PC-3 (cell line): ENCODE measurements at regions of chr21 and their contacts with region 1.

Region 1: DNA sequence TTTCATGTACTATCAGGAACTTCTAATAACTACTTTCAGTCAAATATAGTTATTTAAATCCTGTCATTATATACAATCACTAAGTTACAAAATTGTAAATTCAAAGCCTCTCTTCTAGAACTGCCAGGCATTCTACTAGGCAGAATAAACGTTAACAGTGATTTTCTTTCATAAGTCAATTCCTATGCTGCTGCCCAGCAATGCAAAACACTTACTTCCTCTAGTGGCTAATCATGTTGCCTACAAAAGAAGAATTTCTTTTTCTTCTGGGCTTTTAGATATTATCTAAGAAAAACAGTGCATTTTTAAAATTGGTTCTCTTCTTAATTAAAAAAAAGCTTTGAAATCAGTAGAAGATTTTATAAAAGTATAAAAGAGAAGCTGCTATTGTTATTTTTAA is 509.8 kb upstream of the ADAMTS5 start:
- DNase-seq: no peak
- ATAC-seq: no peak
- H3K4me3 ChIP-seq: no peak overlapping the region
- H3K27ac ChIP-seq: no peak overlapping the region
- H3K4me1 ChIP-seq: no peaks in the 10 kb centered on the region
- H3K27me3 ChIP-seq: no peaks in the 10 kb centered on the region
- CTCF ChIP-seq: peak; percentile 34; the same call in 1 of the 2 replicates

Region 2: DNA sequence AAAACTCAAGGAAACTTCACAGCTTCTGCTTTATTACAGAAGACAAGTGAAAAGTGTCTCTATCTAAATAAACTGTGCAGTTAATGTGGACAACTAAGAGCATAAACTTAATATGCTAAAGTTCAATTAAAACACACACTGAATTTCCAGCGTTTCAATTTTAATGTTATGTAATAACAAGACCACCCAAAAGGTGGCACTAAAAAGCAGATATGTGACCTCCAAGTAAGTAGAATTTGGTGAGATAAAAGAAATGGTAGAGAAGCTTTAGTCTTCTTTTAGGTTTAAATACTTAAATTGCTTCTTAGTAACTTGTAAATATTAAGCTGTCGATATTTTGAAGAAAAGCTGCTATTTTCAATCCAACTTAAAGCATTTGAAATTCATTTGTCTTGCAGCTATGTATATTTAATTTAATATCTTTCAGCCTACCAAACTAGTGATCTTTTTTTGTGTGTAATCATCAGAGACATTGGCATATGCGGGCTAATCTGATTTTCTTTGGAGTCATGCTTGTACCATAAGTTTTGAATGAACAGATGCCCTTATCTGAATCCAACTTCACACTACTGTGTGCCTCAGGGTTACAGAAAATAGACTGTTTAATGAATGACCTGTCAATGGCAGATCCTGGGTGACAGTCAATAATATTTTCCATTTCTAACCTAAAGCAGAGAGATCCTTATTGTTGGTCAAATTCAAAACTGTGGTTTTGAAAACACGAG is 595.0 kb before region 1 on chr21:
- CTCF ChIA-PET with region 1: no interaction called
- POLR2A ChIA-PET with region 1: no interaction called
- intact Hi-C with region 1: loop called (anchors 10 kb)
- DNase-seq: peak; percentile 39
- ATAC-seq: no peak; the same call in 1 of the 2 replicates
- H3K4me3 ChIP-seq: no peak overlapping the region
- H3K27ac ChIP-seq: no peak overlapping the region
- H3K4me1 ChIP-seq: no peaks in the 10 kb centered on the region
- H3K27me3 ChIP-seq: no peaks in the 10 kb centered on the region
- CTCF ChIP-seq: peak; percentile 60